ENCODE measurements at regions of chr2 and their contacts with region 1.

Region 1: GRCh38 chr2:241315093-241315878 is at the start of gene HDLBP:
- DNase-seq: peak; percentile 97 to 100
- H3K4me3 ChIP-seq: peak within 1 kb of the TSS; percentile 85 to 98
- H3K27ac ChIP-seq: peak within 1 kb of the TSS; percentile 99
- H3K4me1 ChIP-seq: peaks cover 0 to 33% of the 10 kb centered on the region in 2 donors
- H3K27me3 ChIP-seq: no peaks in the 10 kb centered on the region
- CTCF ChIP-seq: peak; percentile 16 to 28 (median 25)
- total RNA-seq, gene HDLBP: 308 TPM

Region 2: GRCh38 chr2:240893363-240893844 is 421.9 kb before region 1 on chr2:
- intact Hi-C with region 1: no loop called
- DNase-seq: no peak
- H3K4me3 ChIP-seq: no peak overlapping the region
- H3K27ac ChIP-seq: no peak overlapping the region
- H3K4me1 ChIP-seq: no peaks in the 10 kb centered on the region
- H3K27me3 ChIP-seq: no peaks in the 10 kb centered on the region
- CTCF ChIP-seq: no peak

Region 3: DNA sequence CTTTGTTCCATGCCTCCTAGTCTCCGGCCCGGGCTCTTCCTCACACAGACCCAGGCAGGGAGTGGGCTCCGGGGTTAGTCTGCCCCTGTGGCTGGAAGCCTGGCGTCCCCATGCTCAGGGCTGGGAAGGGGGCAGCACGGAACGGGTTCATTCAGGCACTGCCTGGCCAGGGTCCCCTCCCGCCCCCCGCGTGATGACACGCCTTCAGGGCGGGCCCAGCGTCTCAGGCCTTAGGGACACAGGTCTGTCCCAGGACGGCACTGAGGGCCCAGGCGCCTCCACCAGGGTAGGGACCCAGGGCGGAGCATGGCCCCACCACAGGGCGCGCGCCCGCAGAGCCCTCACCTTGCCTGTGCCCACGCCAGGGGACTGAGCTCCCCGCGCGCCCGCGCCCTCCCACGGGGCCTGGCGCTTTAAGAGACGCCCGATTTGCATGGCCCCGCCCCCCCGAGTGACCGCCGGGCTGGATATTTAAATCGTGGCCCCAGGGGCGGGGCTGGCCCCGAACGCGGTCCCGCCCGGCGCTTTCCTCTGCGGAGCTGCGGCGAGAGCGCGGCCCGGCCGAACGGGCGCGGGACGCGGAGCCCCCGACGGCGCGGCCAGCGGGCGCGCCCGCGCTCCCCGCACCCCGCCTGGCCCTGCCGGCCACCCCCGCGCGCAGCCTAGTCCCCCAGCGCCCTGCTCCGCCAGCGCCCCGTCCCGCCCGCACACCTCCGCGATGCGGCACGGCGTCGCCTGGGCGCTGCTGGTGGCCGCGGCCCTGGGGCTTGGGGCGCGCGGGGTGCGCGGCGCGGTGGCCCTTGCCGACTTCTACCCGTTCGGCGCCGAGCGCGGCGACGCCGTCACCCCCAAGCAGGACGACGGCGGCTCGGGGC is 316.9 kb before region 1 on chr2 and contains the start of gene SNED1:
- intact Hi-C with region 1: loop called (anchors 10 kb)
- DNase-seq: peak; percentile 54 to 93
- H3K4me3 ChIP-seq: peak within 1 kb of the TSS; percentile 79 to 91
- H3K27ac ChIP-seq: peak within 1 kb of the TSS; percentile 92 to 93
- H3K4me1 ChIP-seq: peaks cover 39 to 55% of the 10 kb centered on the region in 2 donors
- H3K27me3 ChIP-seq: no peaks in the 10 kb centered on the region
- CTCF ChIP-seq: no peak
- total RNA-seq, gene SNED1: 84.3 TPM

Region 4: DNA sequence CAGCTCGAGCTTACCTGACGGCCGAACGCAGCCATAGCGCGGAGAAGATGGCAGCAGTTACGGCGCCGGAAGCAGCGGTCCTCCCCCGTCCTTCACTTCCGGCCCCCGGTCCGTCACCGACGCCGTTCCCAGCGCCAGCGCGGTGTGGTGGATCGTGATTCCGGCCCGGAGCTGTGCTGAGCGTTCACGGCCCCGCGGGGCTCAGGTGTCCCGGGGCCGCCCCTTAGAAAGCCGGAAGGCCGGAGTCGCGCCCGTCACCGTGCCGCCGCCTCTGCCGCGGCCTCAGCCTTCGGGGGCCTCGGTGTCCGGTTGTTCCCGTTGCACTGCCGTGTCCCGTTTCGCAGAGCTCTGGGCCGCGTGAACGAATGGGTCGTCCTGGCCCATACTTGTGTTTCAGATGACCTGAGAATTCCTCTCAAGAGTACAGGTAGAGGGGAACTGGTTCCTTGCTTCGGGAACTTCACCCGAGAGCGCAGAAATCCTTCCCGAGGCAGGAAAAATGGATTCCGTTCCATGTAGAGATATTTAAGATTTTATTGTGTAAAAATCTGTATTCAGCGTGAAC is 213.0 kb before region 1 on chr2 and contains the start of gene MTERF4:
- intact Hi-C with region 1: loop called (anchors 2 kb)
- DNase-seq: peak; percentile 52 to 91
- H3K4me3 ChIP-seq: peak within 1 kb of the TSS; percentile 80 to 85
- H3K27ac ChIP-seq: peak within 1 kb of the TSS; percentile 84 to 85
- H3K4me1 ChIP-seq: peaks cover 6 to 10% of the 10 kb centered on the region in 2 donors
- H3K27me3 ChIP-seq: no peaks in the 10 kb centered on the region
- CTCF ChIP-seq: no peak
- total RNA-seq, gene MTERF4: 50.2 TPM

Region 5: GRCh38 chr2:241271641-241272297 is 43.5 kb before region 1 on chr2:
- intact Hi-C with region 1: loop called (anchors 1 kb)
- DNase-seq: peak; percentile 70 to 93
- H3K4me3 ChIP-seq: peak overlapping the region; percentile 98 to 100
- H3K27ac ChIP-seq: peak overlapping the region; percentile 95 to 98
- H3K4me1 ChIP-seq: peaks cover 14 to 28% of the 10 kb centered on the region in 2 donors
- H3K27me3 ChIP-seq: no peaks in the 10 kb centered on the region
- CTCF ChIP-seq: no peak

Region 6: GRCh38 chr2:241355983-241356870 is 40.9 kb after region 1 on chr2 and contains the start of gene FARP2:
- intact Hi-C with region 1: loop called (anchors 1 kb)
- DNase-seq: peak; percentile 99 to 100
- H3K4me3 ChIP-seq: peak within 1 kb of the TSS; percentile 69 to 79
- H3K27ac ChIP-seq: peak within 1 kb of the TSS; percentile 90
- H3K4me1 ChIP-seq: peaks cover 8 to 31% of the 10 kb centered on the region in 2 donors
- H3K27me3 ChIP-seq: no peaks in the 10 kb centered on the region
- CTCF ChIP-seq: no peak
- total RNA-seq, gene FARP2: 19.6 TPM

Region 7: DNA sequence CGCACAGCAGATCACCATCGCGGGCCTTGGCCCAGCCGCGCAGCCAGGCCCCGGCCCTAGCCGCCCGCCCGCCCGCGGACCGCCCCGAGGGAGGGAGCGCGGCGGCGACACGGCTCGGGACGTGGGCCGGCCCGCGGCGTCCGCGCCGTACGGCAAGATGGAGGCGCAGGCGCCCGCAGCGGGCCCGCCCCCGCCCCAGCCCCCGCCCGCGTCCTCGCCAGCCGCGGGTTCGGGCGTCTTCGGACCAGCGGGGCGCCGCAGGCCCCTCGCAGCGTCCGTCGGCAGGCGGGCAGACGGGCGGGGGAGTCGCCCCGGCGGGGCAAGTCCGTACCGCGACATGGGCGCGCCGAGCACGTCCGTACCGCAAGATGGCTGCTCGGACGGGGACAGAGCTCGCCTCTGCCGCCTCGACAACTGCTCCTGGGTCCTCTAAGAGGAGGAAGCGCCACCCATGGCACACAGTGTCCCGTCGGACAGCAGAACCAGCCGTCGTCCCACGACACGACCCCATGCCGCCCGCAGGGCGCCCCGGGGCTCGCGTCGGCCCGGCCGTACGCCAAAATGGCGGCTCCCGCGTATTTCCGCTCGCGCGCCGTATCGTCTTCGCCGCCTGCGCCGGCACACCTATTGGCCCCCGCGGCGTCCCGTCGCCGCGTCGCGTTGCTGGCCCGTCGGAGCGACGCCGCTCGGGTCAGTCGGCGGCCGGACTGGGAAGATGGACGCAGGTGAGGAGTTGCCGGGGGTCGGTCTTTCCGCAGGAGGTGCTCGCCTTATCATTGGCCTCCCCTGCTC is 321.9 kb after region 1 on chr2 and contains the starts of genes ATG4B and THAP4:
- intact Hi-C with region 1: loop called (anchors 1 kb)
- DNase-seq: peak; percentile 26 to 88
- H3K4me3 ChIP-seq: peak within 1 kb of the TSS; percentile 89 to 100
- H3K27ac ChIP-seq: peak within 1 kb of the TSS; percentile 99
- H3K4me1 ChIP-seq: peaks cover 17 to 29% of the 10 kb centered on the region in 2 donors
- H3K27me3 ChIP-seq: no peaks in the 10 kb centered on the region
- CTCF ChIP-seq: no peak
- total RNA-seq, gene ATG4B: 225 TPM
- total RNA-seq, gene THAP4: 80.8 TPM

Region 8: GRCh38 chr2:241702132-241703031 is 387.1 kb after region 1 on chr2:
- intact Hi-C with region 1: loop called (anchors 5 kb)
- DNase-seq: peak; percentile 15 to 87
- H3K4me3 ChIP-seq: peak overlapping the region; percentile 75 to 82
- H3K27ac ChIP-seq: peak overlapping the region; percentile 93 to 96
- H3K4me1 ChIP-seq: peaks cover 6 to 14% of the 10 kb centered on the region in 2 donors
- H3K27me3 ChIP-seq: no peaks in the 10 kb centered on the region
- CTCF ChIP-seq: peak; percentile 20 to 33 (median 27)